Esophagus muscularis mucosa (tissue), 4 donors: ENCODE measurements at regions of chr5 and their contacts with region 1.

Region 1: GRCh38 chr5:132007399-132008165 is 3.9 kb downstream of the ACSL6 start:
- DNase-seq: no peak
- H3K4me3 ChIP-seq: no peak overlapping the region
- H3K27ac ChIP-seq: no peak overlapping the region
- H3K4me1 ChIP-seq: peaks cover 16 to 40% (median 31%) of the 10 kb centered on the region in 4 donors
- H3K27me3 ChIP-seq: peaks cover 0 to 18% (median 0%) of the 10 kb centered on the region in 4 donors
- CTCF ChIP-seq: peak; percentile 71 to 78 (median 75)
- EP300 ChIP-seq: no peak
- POLR2A ChIP-seq: no peak

Region 2: GRCh38 chr5:131423056-131423455 is 584.5 kb before region 1 on chr5:
- intact Hi-C with region 1: loop called (anchors 10 kb)
- DNase-seq: no peak
- H3K4me3 ChIP-seq: no peak overlapping the region
- H3K27ac ChIP-seq: no peak overlapping the region
- H3K4me1 ChIP-seq: no peaks in the 10 kb centered on the region
- H3K27me3 ChIP-seq: no peaks in the 10 kb centered on the region
- CTCF ChIP-seq: peak; percentile 23 to 46 (median 32)
- EP300 ChIP-seq: no peak
- POLR2A ChIP-seq: no peak

Region 3: DNA sequence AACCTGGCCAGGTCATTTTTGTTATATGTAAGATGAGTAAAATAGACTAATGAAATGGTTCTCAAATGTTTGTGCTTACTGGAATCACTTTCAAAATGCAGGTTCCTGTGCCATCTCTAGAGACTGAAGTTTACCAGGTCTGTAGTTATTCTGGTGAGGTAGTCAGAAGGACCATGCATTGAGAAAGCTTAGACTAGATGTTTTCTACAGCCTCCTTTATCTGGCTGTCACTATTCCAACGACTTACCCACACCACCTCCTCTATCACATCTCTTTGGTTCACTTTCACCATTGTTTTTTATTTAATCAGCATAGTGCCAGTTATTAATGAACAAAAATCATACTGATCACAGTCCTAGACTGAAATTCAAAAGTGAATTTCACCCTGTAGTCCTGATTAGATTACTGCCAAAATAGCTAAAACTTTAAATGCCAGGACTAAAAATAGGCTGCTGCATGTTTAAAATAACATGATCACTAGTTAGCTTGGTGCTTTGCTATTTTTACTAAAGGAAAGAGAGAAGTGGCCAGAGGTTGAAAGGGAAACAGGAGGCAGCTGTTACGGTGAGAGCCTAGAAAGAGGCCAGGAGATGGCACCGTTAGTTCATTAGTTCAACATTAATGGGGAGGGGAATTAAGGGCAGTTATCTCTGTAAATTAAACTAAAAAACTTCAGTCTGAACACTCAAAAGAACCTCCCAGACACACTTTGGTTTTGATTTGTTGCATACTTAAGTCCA is 196.9 kb before region 1 on chr5:
- intact Hi-C with region 1: loop called (anchors 1 kb)
- DNase-seq: no peak
- H3K4me3 ChIP-seq: no peak overlapping the region
- H3K27ac ChIP-seq: peak overlapping the region; percentile 19 to 48 (median 34)
- H3K4me1 ChIP-seq: peaks cover 7 to 16% (median 14%) of the 10 kb centered on the region in 4 donors
- H3K27me3 ChIP-seq: no peaks in the 10 kb centered on the region
- CTCF ChIP-seq: peak; percentile 31 to 40 (median 38)
- EP300 ChIP-seq: no peak
- POLR2A ChIP-seq: no peak

Region 4: GRCh38 chr5:132055808-132056609 is 48.4 kb after region 1 on chr5:
- intact Hi-C with region 1: no loop called
- DNase-seq: peak; percentile 82
- H3K4me3 ChIP-seq: no peak overlapping the region
- H3K27ac ChIP-seq: no peak overlapping the region
- H3K4me1 ChIP-seq: no peaks in the 10 kb centered on the region
- H3K27me3 ChIP-seq: no peaks in the 10 kb centered on the region
- CTCF ChIP-seq: no peak
- EP300 ChIP-seq: no peak
- POLR2A ChIP-seq: no peak